K562 (cell line): ENCODE measurements at regions of chr7 and their contacts with region 1.

Region 1: DNA sequence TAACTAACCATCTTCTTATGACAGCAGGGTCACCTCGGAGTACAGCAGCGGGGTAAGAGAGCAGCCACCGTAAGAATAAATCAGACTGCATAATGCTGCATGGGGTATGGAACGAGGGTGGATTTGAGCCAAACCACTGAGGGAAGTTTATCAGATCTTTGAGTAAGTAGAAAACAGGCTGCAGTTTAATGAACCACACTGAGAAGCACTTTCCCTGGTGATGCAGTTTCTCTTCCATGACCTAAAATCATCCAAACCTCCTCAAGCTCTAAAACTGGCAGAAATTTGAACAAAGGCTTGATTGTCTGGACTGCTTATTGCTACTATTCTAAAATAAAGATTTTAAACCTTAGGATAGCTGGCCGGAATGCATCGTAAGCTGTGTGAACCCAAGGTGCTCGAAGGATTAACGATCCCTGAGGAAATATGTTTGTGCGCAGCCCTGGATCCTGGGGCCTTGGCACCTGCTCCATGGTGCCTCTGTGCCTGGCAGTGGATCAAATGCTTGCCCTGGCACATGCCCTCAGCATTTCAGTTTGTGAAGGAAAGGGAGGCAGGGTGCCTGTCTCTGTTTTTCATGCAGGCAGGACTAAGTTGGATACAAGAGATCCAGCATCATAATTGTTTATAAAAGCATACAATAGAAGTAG is 322.7 kb downstream of the LHFPL3 start:
- DNase-seq: no peak
- ATAC-seq: no peak
- H3K4me3 ChIP-seq: no peak overlapping the region
- H3K27ac ChIP-seq: no peak overlapping the region
- H3K4me1 ChIP-seq: no peaks in the 10 kb centered on the region
- H3K27me3 ChIP-seq: peaks cover 0 to 1% of the 10 kb centered on the region in 2 experiments; a peak in 2 of 5 replicates
- CTCF ChIP-seq: no peak
- EP300 ChIP-seq: no peak
- POLR2A ChIP-seq: no peak
- RAD21 ChIP-seq: no peak

Region 2: GRCh38 chr7:105000927-105001336 is 349.8 kb after region 1 on chr7:
- CTCF ChIA-PET with region 1: no interaction called
- POLR2A ChIA-PET with region 1: no interaction called
- in situ Hi-C with region 1: no loop called
- intact Hi-C with region 1: no loop called
- DNase-seq: peak in 1 of 4 experiments; percentile 33
- ATAC-seq: peak; percentile 12
- H3K4me3 ChIP-seq: no peak overlapping the region
- H3K27ac ChIP-seq: no peak overlapping the region
- H3K4me1 ChIP-seq: peaks cover 12 to 17% of the 10 kb centered on the region in 2 experiments
- H3K27me3 ChIP-seq: no peaks in the 10 kb centered on the region
- CTCF ChIP-seq: no peak
- EP300 ChIP-seq: no peak
- POLR2A ChIP-seq: no peak
- RAD21 ChIP-seq: no peak

Region 3: DNA sequence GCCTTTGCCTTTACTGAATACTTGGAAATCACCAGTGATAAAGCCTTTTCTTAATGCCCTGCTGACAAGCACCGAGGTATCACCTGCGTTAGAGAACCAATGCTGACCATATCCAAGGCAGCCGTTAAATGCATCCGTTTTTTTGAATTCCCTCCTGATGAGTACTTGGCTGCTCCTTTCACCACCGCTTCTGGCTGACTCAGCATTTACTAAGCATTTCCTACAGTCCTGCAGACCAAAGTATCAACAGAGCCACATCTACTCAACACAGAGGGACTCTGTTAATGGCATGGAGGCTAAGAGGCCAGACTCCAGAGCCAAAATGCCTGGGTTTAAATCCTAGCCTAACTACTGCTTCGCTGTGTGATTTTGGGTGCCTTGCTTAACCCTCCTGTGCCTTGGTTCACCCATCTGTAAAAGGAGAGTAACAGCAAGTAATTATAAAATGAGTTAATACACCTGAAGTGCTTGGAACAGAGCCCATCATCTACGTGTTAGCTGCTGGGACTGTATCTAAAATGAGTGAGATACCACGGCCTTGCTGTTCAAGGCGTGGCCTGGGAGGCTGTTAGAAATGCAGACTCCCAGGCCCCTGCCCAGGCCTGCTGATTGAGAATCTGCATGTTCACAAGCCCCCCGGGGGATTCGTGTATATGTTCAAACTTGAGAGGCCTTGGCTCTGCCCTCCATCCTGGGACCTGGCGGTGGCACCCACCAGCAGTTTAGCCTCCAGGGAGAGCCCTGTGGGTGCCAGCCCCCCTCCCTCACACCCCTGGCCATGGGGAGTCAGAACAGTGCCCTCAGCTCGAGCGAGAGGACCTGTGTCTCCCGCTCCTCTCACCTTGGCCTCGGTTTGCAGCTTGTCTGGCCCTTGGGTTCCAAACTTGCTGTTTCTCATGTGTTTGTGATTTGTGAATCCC is 961.0 kb after region 1 on chr7:
- CTCF ChIA-PET with region 1: no interaction called
- POLR2A ChIA-PET with region 1: no interaction called
- in situ Hi-C with region 1: loop called (anchors 10 kb)
- intact Hi-C with region 1: no loop called
- DNase-seq: peak in 1 of 4 experiments; percentile 35
- ATAC-seq: peak; percentile 35; the same call in 2 of the 3 replicates
- H3K4me3 ChIP-seq: no peak overlapping the region
- H3K27ac ChIP-seq: no peak overlapping the region
- H3K4me1 ChIP-seq: peaks cover 0 to 12% of the 10 kb centered on the region in 2 experiments; a peak in 1 of 5 replicates
- H3K27me3 ChIP-seq: peaks cover 4 to 53% of the 10 kb centered on the region in 2 experiments; a peak in 4 of 5 replicates
- CTCF ChIP-seq: no peak
- EP300 ChIP-seq: no peak
- POLR2A ChIP-seq: no peak
- RAD21 ChIP-seq: no peak